ENCODE measurements at regions of chr15 and their contacts with region 1.

Region 1: GRCh38 chr15:81384891-81385720 is 11.1 kb upstream of the TMC3 start:
- DNase-seq: no peak
- ATAC-seq: no peak
- H3K4me3 ChIP-seq: no peak overlapping the region
- H3K27ac ChIP-seq: no peak overlapping the region
- H3K4me1 ChIP-seq: no peaks in the 10 kb centered on the region
- H3K27me3 ChIP-seq: peaks cover 0 to 3% (median 0%) of the 10 kb centered on the region in 7 donors
- CTCF ChIP-seq: no peak

Region 2: DNA sequence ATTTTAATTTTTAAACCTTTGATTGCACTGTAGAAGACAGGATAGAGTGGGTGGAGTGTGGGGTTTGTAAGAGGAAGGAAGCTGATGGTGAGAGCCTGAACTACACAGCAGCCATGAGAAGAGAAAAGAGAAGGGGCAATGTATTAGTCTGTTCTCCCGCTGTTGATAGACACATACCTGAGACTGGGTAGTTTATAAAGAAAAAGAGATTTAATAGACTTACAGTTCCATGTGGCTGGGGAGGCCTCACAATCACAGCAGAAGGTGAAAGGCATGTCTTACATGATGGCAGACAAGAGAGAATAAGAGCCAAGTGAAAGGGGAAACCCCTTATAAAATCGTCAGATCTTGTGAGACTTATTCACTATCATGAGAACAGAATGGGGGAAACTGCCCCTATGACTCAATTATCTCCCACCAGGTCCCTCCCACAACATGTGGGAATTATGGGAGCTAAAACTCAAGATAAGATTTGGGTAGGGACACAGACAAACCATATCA is 98.4 kb before region 1 on chr15:
- intact Hi-C with region 1: loop called in 2 of 10 experiments (anchors 5 kb)
- DNase-seq: no peak
- ATAC-seq: peak in 1 of 8 donors; percentile 39
- H3K4me3 ChIP-seq: no peak overlapping the region
- H3K27ac ChIP-seq: peak overlapping the region in 1 of 10 donors; percentile 67
- H3K4me1 ChIP-seq: peaks cover 0 to 43% (median 4%) of the 10 kb centered on the region in 9 donors
- H3K27me3 ChIP-seq: no peaks in the 10 kb centered on the region
- CTCF ChIP-seq: no peak

Region 3: GRCh38 chr15:81293728-81294515 is 91.2 kb before region 1 on chr15:
- intact Hi-C with region 1: loop called in 1 of 10 experiments (anchors 5 kb)
- DNase-seq: no peak
- ATAC-seq: peak in 4 of 8 donors; percentile 25 to 50 (median 38)
- H3K4me3 ChIP-seq: peak overlapping the region in 1 of 10 donors; percentile 34
- H3K27ac ChIP-seq: peak overlapping the region in 6 of 10 donors; percentile 19 to 92 (median 40)
- H3K4me1 ChIP-seq: peaks cover 6 to 76% (median 32%) of the 10 kb centered on the region in 9 donors
- H3K27me3 ChIP-seq: no peaks in the 10 kb centered on the region
- CTCF ChIP-seq: no peak

Region 4: DNA sequence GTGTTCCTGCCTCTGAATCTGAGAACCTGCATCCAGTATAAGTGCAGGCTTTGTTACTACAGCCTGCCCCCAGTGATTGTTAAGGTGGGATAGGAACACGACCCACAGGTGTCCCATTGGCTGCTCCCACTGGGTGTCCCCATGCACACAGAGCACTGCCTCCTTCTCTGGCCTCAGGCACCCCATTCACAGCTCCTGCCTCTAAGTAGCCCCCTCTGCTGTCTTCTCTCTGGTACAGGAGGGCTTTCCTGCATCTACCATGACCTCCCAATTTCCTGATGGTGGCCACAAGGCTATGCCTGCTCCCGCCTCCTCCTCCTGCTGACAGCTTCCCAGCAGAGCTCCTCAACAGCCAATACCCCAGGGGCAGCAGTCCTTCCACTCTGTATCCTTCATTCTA is 227.5 kb after region 1 on chr15:
- intact Hi-C with region 1: no loop called
- DNase-seq: no peak
- ATAC-seq: no peak
- H3K4me3 ChIP-seq: no peak overlapping the region
- H3K27ac ChIP-seq: no peak overlapping the region
- H3K4me1 ChIP-seq: no peaks in the 10 kb centered on the region
- H3K27me3 ChIP-seq: peaks cover 0 to 12% (median 0%) of the 10 kb centered on the region in 7 donors
- CTCF ChIP-seq: no peak